CD8-positive, alpha-beta T cell (primary cell): ENCODE measurements at regions of chr5 and their contacts with region 1.

Region 1: GRCh38 chr5:66929995-66930394 is 266.6 kb downstream of the CD180 start:
- DNase-seq: no peak
- ATAC-seq: no peak
- H3K4me3 ChIP-seq: no peak overlapping the region
- H3K4me3 Mint-ChIP-seq: no peak overlapping the region
- H3K27ac ChIP-seq: no peak overlapping the region
- H3K27ac Mint-ChIP-seq: no peak overlapping the region
- H3K4me1 ChIP-seq: no peaks in the 10 kb centered on the region
- H3K4me1 Mint-ChIP-seq: no peaks in the 10 kb centered on the region
- H3K27me3 ChIP-seq: no peaks in the 10 kb centered on the region
- H3K27me3 Mint-ChIP-seq: peaks cover 9% of the 10 kb centered on the region
- CTCF ChIP-seq: no peak

Region 2: DNA sequence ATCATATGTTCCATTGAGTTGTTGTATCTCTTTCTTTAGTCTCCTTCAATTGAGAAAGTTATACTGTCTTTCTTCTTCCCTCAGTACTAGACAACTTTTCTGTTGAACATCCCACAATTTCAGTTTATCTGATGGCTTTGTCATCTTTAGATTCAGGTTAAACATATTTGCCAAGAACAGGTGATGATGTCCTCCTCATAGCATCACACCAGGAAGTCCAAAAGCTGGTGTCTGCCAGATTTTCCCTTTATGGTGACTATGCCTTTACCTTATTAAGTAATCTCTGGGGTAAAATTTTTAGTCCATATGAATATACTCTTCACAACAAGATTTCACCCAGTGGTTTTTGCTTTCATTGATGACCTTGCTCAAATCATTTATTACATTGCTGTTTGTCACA is 43.3 kb after region 1 on chr5:
- CTCF ChIA-PET with region 1: interaction called, 3 read pairs
- POLR2A ChIA-PET with region 1: no interaction called
- intact Hi-C with region 1: loop called in 1 of 2 experiments (anchors 1 kb)
- DNase-seq: no peak
- ATAC-seq: no peak
- H3K4me3 ChIP-seq: no peak overlapping the region
- H3K4me3 Mint-ChIP-seq: no peak overlapping the region
- H3K27ac ChIP-seq: no peak overlapping the region
- H3K27ac Mint-ChIP-seq: no peak overlapping the region
- H3K4me1 ChIP-seq: no peaks in the 10 kb centered on the region
- H3K4me1 Mint-ChIP-seq: no peaks in the 10 kb centered on the region
- H3K27me3 ChIP-seq: no peaks in the 10 kb centered on the region
- H3K27me3 Mint-ChIP-seq: no peaks in the 10 kb centered on the region
- CTCF ChIP-seq: no peak